ENCODE measurements at regions of chr12 and their contacts with region 1.

Region 1: DNA sequence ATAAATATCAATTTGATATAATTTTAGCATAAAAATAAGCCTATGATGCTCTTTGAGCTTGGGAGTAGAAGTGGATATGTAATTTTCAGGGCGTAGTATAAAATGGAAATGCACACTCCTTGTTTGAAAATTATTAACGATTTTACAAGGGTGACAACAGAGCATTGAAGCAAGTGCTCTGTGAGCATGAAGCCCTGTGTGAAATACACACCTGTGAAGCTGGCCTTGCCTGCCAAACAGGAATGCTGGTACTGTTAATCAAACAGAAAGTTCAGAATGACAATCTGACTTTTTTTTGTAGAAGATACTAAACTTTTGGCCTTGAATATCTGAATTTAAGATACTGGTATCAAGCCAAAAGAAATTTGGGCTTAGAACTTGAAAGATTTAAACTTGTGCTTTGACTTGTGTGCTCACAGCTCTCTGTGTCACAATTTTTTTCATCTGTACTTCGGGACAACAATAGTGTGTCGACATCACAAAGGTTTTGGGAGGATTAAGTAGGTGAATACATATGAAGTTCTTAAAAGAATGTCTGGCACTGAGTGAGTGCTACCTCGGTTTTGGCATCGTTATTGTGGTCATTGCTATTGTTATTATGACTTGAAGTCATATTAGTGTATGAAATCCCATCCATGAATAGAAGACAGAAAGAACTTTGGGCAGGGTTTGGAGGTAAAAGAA is 47.3 kb downstream of the LRRK2 start:
- DNase-seq: no peak
- ATAC-seq: no peak
- H3K4me3 ChIP-seq: no peak overlapping the region
- H3K27ac ChIP-seq: no peak overlapping the region
- H3K4me1 ChIP-seq: no peaks in the 10 kb centered on the region
- H3K27me3 ChIP-seq: no peaks in the 10 kb centered on the region
- CTCF ChIP-seq: no peak
- POLR2A ChIP-seq: no peak

Region 2: DNA sequence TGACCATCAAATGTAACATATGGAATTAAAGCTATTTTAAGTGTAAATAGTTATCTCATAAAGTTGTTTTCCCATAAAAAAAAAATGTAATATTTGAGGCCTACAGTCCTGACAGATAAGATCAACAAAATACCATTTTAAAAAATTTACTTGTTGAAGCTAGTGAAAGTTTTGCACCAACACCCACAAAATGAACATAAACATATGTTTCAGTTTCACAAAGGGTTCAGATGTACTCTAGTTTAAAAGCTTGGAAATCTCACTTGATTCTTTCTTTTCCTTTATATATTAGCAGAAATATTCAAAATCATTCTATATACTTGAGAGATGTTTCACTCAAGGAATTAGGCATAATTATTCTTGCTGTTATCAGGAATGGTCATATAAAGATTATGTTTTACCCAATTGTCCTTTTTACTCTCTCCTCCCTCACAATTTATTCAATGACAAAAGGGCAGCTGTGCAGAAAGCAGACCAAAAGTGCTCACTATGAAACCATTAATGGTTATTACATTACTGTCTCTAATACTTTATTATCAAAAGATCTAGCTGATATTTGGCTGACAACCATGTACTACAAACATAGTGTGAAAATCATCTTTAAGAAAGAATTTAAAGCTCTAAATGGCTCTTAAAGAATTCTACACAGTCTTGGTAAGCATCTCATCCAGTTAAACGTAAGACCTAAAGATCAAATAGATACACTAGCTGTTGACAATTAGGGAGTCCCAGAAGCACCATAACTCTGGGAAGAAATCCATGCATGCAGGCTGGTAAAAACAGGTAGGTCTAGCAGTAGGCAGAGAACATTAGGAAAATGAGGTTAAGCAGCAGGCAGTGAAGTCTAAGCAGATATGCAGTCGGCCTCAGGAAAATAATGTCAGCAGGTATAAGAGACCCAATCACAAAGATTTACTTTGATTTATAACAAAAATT is 858.0 kb before region 1 on chr12:
- intact Hi-C with region 1: no loop called
- DNase-seq: no peak
- ATAC-seq: no peak
- H3K4me3 ChIP-seq: no peak overlapping the region
- H3K27ac ChIP-seq: peak overlapping the region in 9 of 12 donors; percentile 26 to 72 (median 61)
- H3K4me1 ChIP-seq: peaks cover 0 to 18% (median 0%) of the 10 kb centered on the region in 12 donors
- H3K27me3 ChIP-seq: no peaks in the 10 kb centered on the region
- CTCF ChIP-seq: no peak
- POLR2A ChIP-seq: no peak

Region 3: GRCh38 chr12:40224439-40225291 is 47.5 kb before region 1 on chr12 and contains the start of gene LRRK2:
- intact Hi-C with region 1: no loop called
- DNase-seq: peak; percentile 86 to 93 (median 89)
- ATAC-seq: peak; percentile 65 to 96 (median 92)
- H3K4me3 ChIP-seq: peak within 1 kb of the TSS; percentile 52 to 82 (median 70)
- H3K27ac ChIP-seq: peak within 1 kb of the TSS; percentile 75 to 98 (median 94)
- H3K4me1 ChIP-seq: peaks cover 0 to 53% (median 9%) of the 10 kb centered on the region in 12 donors
- H3K27me3 ChIP-seq: no peaks in the 10 kb centered on the region
- CTCF ChIP-seq: peak in 2 of 12 donors; percentile 8 to 23
- POLR2A ChIP-seq: peak in 1 of 2 donors; percentile 52
- total RNA-seq, gene LRRK2: 4.4 to 12.3 (median 6.4) TPM

Region 4: DNA sequence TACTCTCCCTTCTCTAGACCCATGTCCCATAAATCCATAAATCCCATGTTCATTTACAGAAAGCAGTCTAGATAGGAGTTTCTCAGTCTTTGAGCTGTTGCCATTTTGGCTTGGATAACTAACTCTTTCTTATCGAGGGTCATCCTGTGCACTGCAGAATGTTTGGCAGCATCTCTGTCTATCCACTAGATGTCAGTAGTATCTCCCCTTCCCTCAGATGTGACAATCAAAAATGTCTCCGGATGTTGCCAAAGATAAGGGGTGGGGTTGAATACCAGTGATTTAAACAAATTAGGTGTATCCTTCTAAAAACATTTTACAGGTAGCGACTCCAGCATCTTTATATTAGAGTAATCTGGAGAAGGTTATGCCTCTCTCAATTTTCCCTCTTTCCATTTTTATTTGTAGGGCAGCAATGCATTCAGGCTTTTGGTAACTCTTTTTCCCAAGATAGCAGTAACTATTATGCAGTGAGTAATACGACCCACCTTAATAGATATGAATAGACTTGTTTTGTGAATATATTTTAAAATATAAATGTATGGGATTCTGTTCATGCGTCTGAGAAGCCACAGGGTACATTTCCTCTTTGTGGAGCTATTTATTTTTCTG is 53.3 kb after region 1 on chr12:
- intact Hi-C with region 1: loop called in 1 of 10 experiments (anchors 10 kb)
- DNase-seq: no peak
- ATAC-seq: peak in 1 of 4 donors; percentile 31
- H3K4me3 ChIP-seq: no peak overlapping the region
- H3K27ac ChIP-seq: no peak overlapping the region
- H3K4me1 ChIP-seq: no peaks in the 10 kb centered on the region
- H3K27me3 ChIP-seq: no peaks in the 10 kb centered on the region
- CTCF ChIP-seq: peak in 9 of 12 donors; percentile 9 to 45 (median 34)
- POLR2A ChIP-seq: no peak

Region 5: GRCh38 chr12:40446385-40446784 is 174.3 kb after region 1 on chr12:
- intact Hi-C with region 1: no loop called
- DNase-seq: no peak
- ATAC-seq: no peak
- H3K4me3 ChIP-seq: no peak overlapping the region
- H3K27ac ChIP-seq: no peak overlapping the region
- H3K4me1 ChIP-seq: no peaks in the 10 kb centered on the region
- H3K27me3 ChIP-seq: no peaks in the 10 kb centered on the region
- CTCF ChIP-seq: peak in 3 of 12 donors; percentile 13 to 20 (median 16)
- POLR2A ChIP-seq: no peak